Activated naive CD4-positive, alpha-beta T cell treated with anti-CD3 and anti-CD28 coated beads for 36 hours (primary cell): ENCODE measurements at regions of chr4 and their contacts with region 1.

Region 1: GRCh38 chr4:149264093-149264733 is 551.4 kb downstream of the IQCM start:
- DNase-seq: peak; percentile 30
- H3K4me3 Mint-ChIP-seq: no peak overlapping the region
- H3K27ac Mint-ChIP-seq: no peak overlapping the region
- H3K4me1 Mint-ChIP-seq: no peaks in the 10 kb centered on the region
- H3K27me3 Mint-ChIP-seq: peaks cover 2% of the 10 kb centered on the region

Region 2: DNA sequence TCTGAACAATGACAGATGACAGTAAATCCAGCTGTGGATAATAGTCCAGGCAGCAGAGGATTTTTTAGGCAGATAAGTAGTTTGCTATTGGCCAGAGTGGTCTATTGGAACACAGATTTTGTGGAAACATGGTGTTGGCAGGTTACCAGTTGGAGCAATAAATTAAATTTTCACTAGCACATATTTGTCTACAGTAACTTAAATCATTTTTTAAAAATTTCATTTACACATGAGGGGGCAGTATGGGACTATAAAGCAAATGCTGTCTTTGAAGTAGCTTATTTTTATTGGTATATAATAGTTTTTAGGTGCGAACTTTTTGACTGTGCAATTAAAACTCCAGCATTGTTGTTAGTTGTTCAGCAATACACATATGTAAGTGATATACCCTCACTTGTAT is 1242.5 kb before region 1 on chr4:
- CTCF ChIA-PET with region 1: no interaction called
- intact Hi-C with region 1: loop called (anchors 5 kb)
- DNase-seq: no peak
- H3K4me3 Mint-ChIP-seq: no peak overlapping the region
- H3K27ac Mint-ChIP-seq: no peak overlapping the region
- H3K4me1 Mint-ChIP-seq: no peaks in the 10 kb centered on the region
- H3K27me3 Mint-ChIP-seq: no peaks in the 10 kb centered on the region

Region 3: DNA sequence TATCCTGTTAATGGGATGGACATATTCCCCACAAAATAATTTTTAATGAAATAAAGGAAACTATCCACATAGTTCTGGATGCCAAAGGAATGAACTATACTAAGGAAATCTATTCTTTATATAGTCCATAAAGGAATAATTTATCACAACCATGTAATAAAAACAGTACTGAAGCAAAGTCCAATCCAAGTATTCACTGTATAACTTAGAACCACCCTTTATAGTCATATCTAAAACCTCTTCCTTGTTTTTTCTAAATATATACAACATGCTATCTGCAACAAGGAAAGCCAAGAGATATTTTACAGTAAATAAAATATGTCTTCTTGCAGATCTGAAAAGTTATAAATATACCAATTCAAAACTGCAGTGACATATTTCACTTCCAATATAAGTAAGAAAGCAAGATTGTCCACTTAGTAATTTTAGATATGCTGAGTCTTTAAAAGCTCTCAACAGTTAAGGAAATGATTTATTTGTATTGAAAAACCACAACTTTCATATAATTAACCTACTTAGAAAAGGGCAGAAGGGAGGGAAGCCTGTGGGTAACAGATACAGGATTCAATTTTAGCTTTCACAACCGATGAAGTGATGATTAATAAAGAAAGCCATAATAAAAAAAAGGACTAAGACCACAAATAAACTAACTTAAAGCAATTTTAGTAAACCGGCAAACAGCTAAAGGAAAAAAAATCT is 830.0 kb before region 1 on chr4:
- CTCF ChIA-PET with region 1: no interaction called
- intact Hi-C with region 1: loop called (anchors 10 kb)
- DNase-seq: no peak
- H3K4me3 Mint-ChIP-seq: no peak overlapping the region
- H3K27ac Mint-ChIP-seq: no peak overlapping the region
- H3K4me1 Mint-ChIP-seq: peaks cover 65% of the 10 kb centered on the region
- H3K27me3 Mint-ChIP-seq: no peaks in the 10 kb centered on the region

Region 4: DNA sequence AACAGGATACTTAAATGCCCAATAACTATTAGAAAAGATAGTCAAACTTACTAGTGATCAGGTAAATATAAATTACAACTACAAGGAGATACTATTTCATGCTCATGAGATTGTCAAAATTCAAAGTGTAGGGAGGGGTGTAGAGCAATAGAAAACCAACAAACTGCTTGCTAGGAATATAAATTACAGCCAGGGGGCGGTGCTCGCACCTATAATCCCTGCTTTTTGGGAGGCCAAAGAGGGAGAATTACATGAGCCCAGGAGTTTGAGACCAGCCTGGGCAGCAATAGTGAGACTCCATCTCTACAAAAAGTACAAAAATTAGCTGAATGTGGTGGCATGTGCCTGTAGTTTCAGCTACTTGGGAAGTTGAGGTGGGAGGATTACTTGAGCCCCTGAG is 265.5 kb before region 1 on chr4:
- CTCF ChIA-PET with region 1: interaction called, 4 read pairs
- intact Hi-C with region 1: loop called (anchors 2 kb)
- DNase-seq: peak; percentile 13
- H3K4me3 Mint-ChIP-seq: no peak overlapping the region
- H3K27ac Mint-ChIP-seq: no peak overlapping the region
- H3K4me1 Mint-ChIP-seq: no peaks in the 10 kb centered on the region
- H3K27me3 Mint-ChIP-seq: no peaks in the 10 kb centered on the region